ENCODE measurements at regions of chr2 and their contacts with region 1.

Region 1: GRCh38 chr2:170973492-170974303 is 44.6 kb downstream of the GORASP2 start:
- DNase-seq: peak; percentile 83 to 95
- ATAC-seq: peak; percentile 98 to 99 (median 99)
- H3K4me3 ChIP-seq: peak overlapping the region; percentile 92
- H3K4me3 Mint-ChIP-seq: peak overlapping the region; percentile 87
- H3K27ac ChIP-seq: peak overlapping the region; percentile 43
- H3K27ac Mint-ChIP-seq: peak overlapping the region in 1 of 2 donors; percentile 53
- H3K4me1 ChIP-seq: peaks cover 11% of the 10 kb centered on the region
- H3K4me1 Mint-ChIP-seq: peaks cover 11 to 13% of the 10 kb centered on the region in 2 donors
- H3K27me3 ChIP-seq: no peaks in the 10 kb centered on the region
- H3K27me3 Mint-ChIP-seq: peaks cover 0 to 3% of the 10 kb centered on the region in 2 donors
- CTCF ChIP-seq: peak; percentile 95

Region 2: DNA sequence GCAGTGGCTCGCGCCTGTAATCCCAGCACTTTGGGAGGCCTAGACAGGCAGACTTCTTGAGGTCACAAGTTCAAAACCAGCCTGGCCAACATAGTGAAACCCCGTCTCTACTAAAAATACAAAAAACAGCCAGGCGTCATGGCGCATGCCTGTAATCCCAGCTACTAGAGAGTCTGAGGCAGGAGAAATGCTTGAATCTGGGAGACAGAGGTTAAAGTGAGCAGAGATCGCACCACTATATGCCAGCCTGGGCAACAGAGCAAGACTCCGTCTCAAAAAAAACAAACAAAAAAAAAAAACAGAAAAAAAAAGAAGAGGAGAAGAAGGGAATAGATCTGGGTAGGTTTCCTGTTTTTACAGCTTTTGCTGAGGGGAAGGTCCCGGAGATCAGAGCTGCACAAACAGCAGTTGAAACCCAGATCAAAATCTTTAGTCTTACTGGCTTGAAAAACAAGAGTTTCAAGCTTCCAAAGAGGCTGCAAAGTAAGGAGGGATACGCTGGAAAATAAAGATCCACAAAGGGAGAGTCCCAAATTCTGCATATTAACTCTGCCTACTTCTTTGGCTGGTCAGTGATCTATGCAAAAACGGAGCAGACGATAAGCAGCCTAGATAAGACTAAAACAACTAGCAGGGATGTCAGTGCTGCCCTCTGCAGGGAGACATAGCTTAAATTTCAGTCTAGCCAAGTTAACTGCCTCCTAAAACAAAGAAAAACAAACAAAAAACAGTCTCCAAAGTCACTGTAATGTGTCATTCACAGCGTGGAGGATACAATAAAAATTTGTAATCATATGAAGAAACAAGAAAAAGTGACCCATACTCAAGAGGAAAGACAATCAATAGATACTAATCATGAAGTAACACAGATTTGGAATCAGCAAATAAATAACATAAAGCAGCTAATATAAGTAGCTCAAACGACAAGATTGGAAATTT is 112.9 kb after region 1 on chr2:
- intact Hi-C with region 1: loop called (anchors 2 kb)
- DNase-seq: peak in 1 of 2 donors; percentile 81
- ATAC-seq: peak; percentile 59 to 75 (median 67)
- H3K4me3 ChIP-seq: no peak overlapping the region
- H3K4me3 Mint-ChIP-seq: peak overlapping the region; percentile 74
- H3K27ac ChIP-seq: no peak overlapping the region
- H3K27ac Mint-ChIP-seq: peak overlapping the region; percentile 10 to 49
- H3K4me1 ChIP-seq: peaks cover 3% of the 10 kb centered on the region
- H3K4me1 Mint-ChIP-seq: peaks cover 41 to 49% of the 10 kb centered on the region in 2 donors
- H3K27me3 ChIP-seq: no peaks in the 10 kb centered on the region
- H3K27me3 Mint-ChIP-seq: no peaks in the 10 kb centered on the region
- CTCF ChIP-seq: peak; percentile 50

Region 3: GRCh38 chr2:171159372-171160118 is 185.8 kb after region 1 on chr2:
- intact Hi-C with region 1: loop called (anchors 1 kb)
- DNase-seq: peak; percentile 47 to 86
- ATAC-seq: peak; percentile 28 to 46 (median 33)
- H3K4me3 ChIP-seq: peak overlapping the region; percentile 74
- H3K4me3 Mint-ChIP-seq: peak overlapping the region; percentile 98
- H3K27ac ChIP-seq: peak overlapping the region; percentile 90
- H3K27ac Mint-ChIP-seq: peak overlapping the region; percentile 87 to 96
- H3K4me1 ChIP-seq: peaks cover 3% of the 10 kb centered on the region
- H3K4me1 Mint-ChIP-seq: peaks cover 48 to 50% of the 10 kb centered on the region in 2 donors
- H3K27me3 ChIP-seq: no peaks in the 10 kb centered on the region
- H3K27me3 Mint-ChIP-seq: no peaks in the 10 kb centered on the region
- CTCF ChIP-seq: peak; percentile 50

Region 4: DNA sequence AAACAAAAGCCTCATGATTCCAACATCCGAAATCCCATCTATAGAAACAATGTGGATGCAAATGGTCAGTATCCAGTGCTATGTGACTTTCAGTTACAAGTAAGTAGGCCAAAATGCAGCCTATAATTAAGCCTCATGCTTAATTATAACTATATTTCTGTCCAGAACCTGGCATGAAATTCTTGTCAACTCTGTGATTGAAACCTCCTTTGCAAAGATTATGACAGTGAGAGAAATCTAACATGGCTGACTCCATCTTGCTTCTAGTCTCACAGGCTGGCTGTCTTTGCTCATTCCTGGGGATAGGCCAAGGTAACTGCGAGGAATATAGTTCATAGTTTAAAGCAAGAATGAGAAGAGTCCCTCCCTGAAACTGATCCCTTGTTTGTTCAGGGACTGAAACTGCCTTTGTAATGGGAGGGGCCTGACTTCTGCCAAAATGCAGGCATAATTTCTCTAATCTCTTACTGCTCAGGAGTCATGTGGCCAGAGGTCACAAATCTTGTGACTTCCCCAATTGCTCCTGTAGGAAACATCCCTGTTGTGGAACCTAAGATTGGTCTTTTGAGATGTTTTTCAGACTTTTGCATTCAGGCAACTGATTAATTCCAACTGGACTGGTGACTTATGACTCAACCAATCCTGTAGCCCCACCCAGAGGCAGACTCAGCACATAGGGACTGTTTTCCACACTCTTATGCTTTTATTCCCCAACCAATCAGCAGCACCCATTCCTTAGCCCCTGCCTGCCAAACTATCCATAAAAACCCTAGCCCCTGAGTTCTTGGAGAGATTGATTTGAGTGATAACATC is 271.5 kb after region 1 on chr2:
- intact Hi-C with region 1: loop called (anchors 10 kb)
- DNase-seq: peak in 1 of 2 donors; percentile 25
- ATAC-seq: no peak
- H3K4me3 ChIP-seq: no peak overlapping the region
- H3K4me3 Mint-ChIP-seq: no peak overlapping the region
- H3K27ac ChIP-seq: no peak overlapping the region
- H3K27ac Mint-ChIP-seq: no peak overlapping the region
- H3K4me1 ChIP-seq: peaks cover 7% of the 10 kb centered on the region
- H3K4me1 Mint-ChIP-seq: peaks cover 5 to 8% of the 10 kb centered on the region in 2 donors
- H3K27me3 ChIP-seq: no peaks in the 10 kb centered on the region
- H3K27me3 Mint-ChIP-seq: peaks cover 6 to 8% of the 10 kb centered on the region in 2 donors
- CTCF ChIP-seq: no peak

Region 5: GRCh38 chr2:171416009-171416926 is 442.6 kb after region 1 on chr2:
- intact Hi-C with region 1: loop called (anchors 1 kb)
- DNase-seq: peak; percentile 45 to 88
- ATAC-seq: peak; percentile 88 to 99 (median 98)
- H3K4me3 ChIP-seq: no peak overlapping the region
- H3K4me3 Mint-ChIP-seq: no peak overlapping the region
- H3K27ac ChIP-seq: no peak overlapping the region
- H3K27ac Mint-ChIP-seq: peak overlapping the region in 1 of 2 donors; percentile 6
- H3K4me1 ChIP-seq: no peaks in the 10 kb centered on the region
- H3K4me1 Mint-ChIP-seq: peaks cover 6 to 14% of the 10 kb centered on the region in 2 donors
- H3K27me3 ChIP-seq: no peaks in the 10 kb centered on the region
- H3K27me3 Mint-ChIP-seq: no peaks in the 10 kb centered on the region
- CTCF ChIP-seq: peak; percentile 70